ENCODE measurements at regions of chr13 and their contacts with region 1.

Region 1: DNA sequence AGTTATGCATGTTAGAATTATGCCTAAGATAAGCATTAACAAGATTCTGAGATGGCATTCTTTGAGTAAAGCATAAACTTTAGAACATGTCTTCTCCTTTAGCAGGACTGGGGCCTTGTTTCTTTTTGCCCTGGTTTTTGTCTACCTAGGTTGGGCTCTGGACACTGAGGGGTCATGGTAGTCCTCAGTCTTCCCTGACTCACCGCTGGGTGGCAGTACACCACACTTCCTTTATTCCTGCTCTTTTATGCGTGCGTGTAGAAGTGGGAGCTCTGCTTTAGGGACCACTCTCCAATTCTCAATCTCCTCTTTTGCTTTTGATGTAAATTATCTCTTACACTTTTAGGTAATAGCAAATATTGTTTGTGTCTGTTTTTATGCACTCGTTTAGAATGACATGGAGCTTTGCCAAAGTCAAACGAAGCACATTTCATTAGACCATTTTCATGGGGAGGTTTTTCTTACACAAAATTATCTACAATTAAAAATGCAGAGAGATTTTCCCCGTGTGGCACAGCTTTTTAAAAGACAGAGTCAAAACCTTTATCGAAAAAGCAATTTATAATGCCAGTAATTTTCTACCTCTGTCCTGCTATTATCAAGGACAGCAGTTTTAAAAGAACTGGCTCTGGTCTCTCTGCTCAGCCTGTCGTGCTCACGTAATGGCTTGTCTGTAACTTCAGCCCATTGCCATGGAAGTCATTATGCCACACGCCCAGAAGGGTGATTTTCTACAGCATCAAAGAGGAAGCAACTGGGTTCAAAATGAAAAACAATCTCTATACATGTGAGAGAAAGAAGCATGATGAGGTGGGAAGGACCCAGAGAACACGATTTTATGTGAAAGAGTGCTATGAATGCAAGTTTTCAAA is 413.9 kb downstream of the COG6 start:
- DNase-seq: no peak
- H3K4me3 ChIP-seq: no peak overlapping the region
- H3K27ac ChIP-seq: no peak overlapping the region
- H3K4me1 ChIP-seq: peaks cover 10% of the 10 kb centered on the region
- H3K27me3 ChIP-seq: no peaks in the 10 kb centered on the region
- CTCF ChIP-seq: peak; percentile 66 to 90 (median 75)
- POLR2A ChIP-seq: no peak

Region 2: GRCh38 chr13:40445557-40445990 is 376.2 kb after region 1 on chr13:
- intact Hi-C with region 1: loop called (anchors 10 kb)
- DNase-seq: no peak
- H3K4me3 ChIP-seq: no peak overlapping the region
- H3K27ac ChIP-seq: no peak overlapping the region
- H3K4me1 ChIP-seq: peaks cover 19% of the 10 kb centered on the region
- H3K27me3 ChIP-seq: no peaks in the 10 kb centered on the region
- CTCF ChIP-seq: no peak
- POLR2A ChIP-seq: no peak